Activated CD8-positive, alpha-beta T cell treated with anti-CD3 and anti-CD28 coated beads for 36 hours (primary cell): ENCODE measurements at regions of chr5 and their contacts with region 1.

Region 1: DNA sequence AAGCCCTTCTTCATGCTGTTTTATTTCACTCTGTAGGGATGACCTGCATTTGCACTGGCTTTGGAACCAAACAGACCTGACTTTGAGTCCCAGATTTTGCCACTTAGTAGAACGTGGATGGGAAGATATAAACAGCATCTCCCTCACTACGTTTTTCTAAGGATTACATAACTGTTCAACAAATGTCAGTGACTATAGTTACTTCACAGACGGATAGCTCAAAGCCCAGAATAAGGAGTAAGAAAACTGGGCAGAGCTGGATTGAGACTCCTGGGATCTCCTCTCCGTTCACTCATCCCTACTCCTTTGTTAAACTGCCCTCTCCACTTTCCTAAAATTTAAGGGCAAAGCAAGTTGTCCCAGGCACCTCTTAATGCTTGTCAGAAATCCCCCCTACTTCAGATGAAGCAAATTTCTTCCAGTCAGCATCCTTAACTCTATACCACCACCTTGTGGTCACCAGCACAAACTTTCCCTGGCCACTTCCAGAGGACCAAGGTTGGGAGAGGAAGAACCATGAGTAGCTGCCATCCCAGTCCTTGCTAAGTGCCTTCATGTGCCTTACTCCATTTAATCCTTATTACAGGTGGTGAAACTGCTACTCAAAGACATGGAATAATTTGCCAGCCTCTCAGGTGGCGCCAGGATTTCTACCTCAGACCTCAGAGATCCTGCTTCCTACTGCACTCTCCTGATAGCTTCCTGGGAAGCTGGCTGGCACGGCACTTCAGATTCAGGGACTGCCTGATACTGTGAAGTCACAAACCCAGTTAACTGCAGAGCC is 38.4 kb downstream of the EGR1 start:
- DNase-seq: peak; percentile 32
- ATAC-seq: peak; percentile 81
- H3K4me3 Mint-ChIP-seq: no peak overlapping the region
- H3K27ac Mint-ChIP-seq: no peak overlapping the region
- H3K4me1 Mint-ChIP-seq: peaks cover 2% of the 10 kb centered on the region
- H3K27me3 Mint-ChIP-seq: no peaks in the 10 kb centered on the region
- CTCF ChIP-seq: peak; percentile 82

Region 2: GRCh38 chr5:138458384-138458783 is 45.3 kb before region 1 on chr5:
- CTCF ChIA-PET with region 1: interaction called, 44 read pairs
- POLR2A ChIA-PET with region 1: no interaction called
- intact Hi-C with region 1: no loop called
- DNase-seq: no peak
- ATAC-seq: no peak
- H3K4me3 Mint-ChIP-seq: peak overlapping the region; percentile 80
- H3K27ac Mint-ChIP-seq: peak overlapping the region; percentile 100
- H3K4me1 Mint-ChIP-seq: peaks cover 45% of the 10 kb centered on the region
- H3K27me3 Mint-ChIP-seq: no peaks in the 10 kb centered on the region
- CTCF ChIP-seq: no peak

Region 3: GRCh38 chr5:138464008-138464387 is 39.7 kb before region 1 on chr5:
- CTCF ChIA-PET with region 1: interaction called, 44 read pairs
- POLR2A ChIA-PET with region 1: interaction called, 6 read pairs
- intact Hi-C with region 1: loop called (anchors 5 kb)
- DNase-seq: peak; percentile 94
- ATAC-seq: peak; percentile 57
- H3K4me3 Mint-ChIP-seq: peak overlapping the region; percentile 82
- H3K27ac Mint-ChIP-seq: peak overlapping the region; percentile 97
- H3K4me1 Mint-ChIP-seq: peaks cover 53% of the 10 kb centered on the region
- H3K27me3 Mint-ChIP-seq: no peaks in the 10 kb centered on the region
- CTCF ChIP-seq: peak; percentile 94

Region 4: GRCh38 chr5:138491669-138492559 is 11.8 kb before region 1 on chr5:
- CTCF ChIA-PET with region 1: interaction called, 10 read pairs
- POLR2A ChIA-PET with region 1: interaction called, 9 read pairs
- intact Hi-C with region 1: no loop called
- DNase-seq: peak; percentile 85
- ATAC-seq: peak; percentile 99
- H3K4me3 Mint-ChIP-seq: peak overlapping the region; percentile 78
- H3K27ac Mint-ChIP-seq: no peak overlapping the region
- H3K4me1 Mint-ChIP-seq: peaks cover 16% of the 10 kb centered on the region
- H3K27me3 Mint-ChIP-seq: peaks cover 22% of the 10 kb centered on the region
- CTCF ChIP-seq: no peak